Activated B cell treated with CpG ODN at 0.5 μM for 24 hours (primary cell): ENCODE measurements at regions of chr15 and their contacts with region 1.

Region 1: GRCh38 chr15:37100109-37100965 is at the start of gene MEIS2:
- DNase-seq: no peak
- ATAC-seq: peak; percentile 31
- H3K4me3 Mint-ChIP-seq: peak within 1 kb of the TSS; percentile 94
- H3K27ac Mint-ChIP-seq: peak within 1 kb of the TSS; percentile 39
- H3K4me1 Mint-ChIP-seq: peaks cover 43% of the 10 kb centered on the region
- H3K27me3 Mint-ChIP-seq: peaks cover 71% of the 10 kb centered on the region
- CTCF ChIP-seq: no peak
- total RNA-seq, gene MEIS2: 0.24 TPM in 1 of 2 replicates, not detected in the other

Region 2: GRCh38 chr15:36579792-36580431 is 520.4 kb before region 1 on chr15:
- CTCF ChIA-PET with region 1: no interaction called
- POLR2A ChIA-PET with region 1: no interaction called
- intact Hi-C with region 1: loop called (anchors 2 kb)
- DNase-seq: no peak
- ATAC-seq: peak; percentile 19
- H3K4me3 Mint-ChIP-seq: peak overlapping the region; percentile 93
- H3K27ac Mint-ChIP-seq: peak overlapping the region; percentile 96
- H3K4me1 Mint-ChIP-seq: peaks cover 22% of the 10 kb centered on the region
- H3K27me3 Mint-ChIP-seq: peaks cover 2% of the 10 kb centered on the region
- CTCF ChIP-seq: no peak

Region 3: GRCh38 chr15:36875740-36876334 is 224.5 kb before region 1 on chr15:
- CTCF ChIA-PET with region 1: no interaction called
- POLR2A ChIA-PET with region 1: no interaction called
- intact Hi-C with region 1: no loop called
- DNase-seq: no peak
- ATAC-seq: no peak
- H3K4me3 Mint-ChIP-seq: no peak overlapping the region
- H3K27ac Mint-ChIP-seq: no peak overlapping the region
- H3K4me1 Mint-ChIP-seq: peaks cover 11% of the 10 kb centered on the region
- H3K27me3 Mint-ChIP-seq: peaks cover 46% of the 10 kb centered on the region
- CTCF ChIP-seq: no peak